HAP-1 (cell line): ENCODE measurements at regions of chr15 and their contacts with region 1.

Region 1: DNA sequence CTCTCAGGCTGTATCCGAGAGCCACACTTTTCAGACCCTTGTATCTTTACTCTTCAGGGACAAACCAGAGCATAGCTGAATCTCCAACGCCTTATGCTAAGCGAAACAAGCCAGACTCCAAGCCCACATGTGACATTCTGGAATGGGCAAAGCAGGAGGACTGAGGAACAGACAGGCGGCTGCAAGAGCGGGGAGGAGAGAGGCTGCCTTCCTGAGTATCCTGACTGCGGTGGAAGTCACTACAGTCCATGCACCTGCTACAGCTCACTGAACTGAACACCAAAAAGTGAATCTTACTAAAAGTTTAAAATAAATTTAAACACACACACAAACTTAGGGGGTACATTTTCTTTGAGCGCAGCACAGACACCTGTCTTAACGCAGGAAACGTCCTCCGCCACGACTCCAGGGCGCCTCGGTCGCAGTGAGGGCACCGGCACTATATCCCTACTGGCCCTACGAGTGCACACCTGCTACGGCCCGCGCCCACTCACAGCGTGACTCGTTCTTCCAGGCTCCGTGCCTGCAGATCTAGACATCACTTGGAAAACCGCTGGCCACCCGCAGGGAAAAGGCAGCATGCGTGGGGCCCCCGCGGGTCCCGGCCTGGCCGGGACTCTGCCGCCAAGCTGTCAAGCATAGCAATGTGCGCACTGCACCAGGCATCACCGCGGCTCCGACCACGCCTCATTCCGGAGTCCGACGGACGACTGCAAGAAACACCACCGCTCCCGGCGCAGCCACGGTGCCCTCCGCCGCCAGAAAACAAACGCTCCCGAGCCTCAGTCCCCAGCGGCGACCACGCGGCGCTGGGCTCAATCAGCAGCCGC is 1.3 kb downstream of the CYFIP1 start:
- DNase-seq: peak; percentile 48 to 78
- H3K4me3 ChIP-seq: peak overlapping the region; percentile 76
- H3K4me1 ChIP-seq: peaks cover 6% of the 10 kb centered on the region
- H3K27me3 ChIP-seq: no peaks in the 10 kb centered on the region

Region 2: GRCh38 chr15:22922003-22922402 is 56.9 kb before region 1 on chr15:
- in situ Hi-C with region 1: loop called (anchors 10 kb)
- DNase-seq: no peak
- H3K4me3 ChIP-seq: no peak overlapping the region
- H3K4me1 ChIP-seq: peaks cover 16% of the 10 kb centered on the region
- H3K27me3 ChIP-seq: no peaks in the 10 kb centered on the region

Region 3: DNA sequence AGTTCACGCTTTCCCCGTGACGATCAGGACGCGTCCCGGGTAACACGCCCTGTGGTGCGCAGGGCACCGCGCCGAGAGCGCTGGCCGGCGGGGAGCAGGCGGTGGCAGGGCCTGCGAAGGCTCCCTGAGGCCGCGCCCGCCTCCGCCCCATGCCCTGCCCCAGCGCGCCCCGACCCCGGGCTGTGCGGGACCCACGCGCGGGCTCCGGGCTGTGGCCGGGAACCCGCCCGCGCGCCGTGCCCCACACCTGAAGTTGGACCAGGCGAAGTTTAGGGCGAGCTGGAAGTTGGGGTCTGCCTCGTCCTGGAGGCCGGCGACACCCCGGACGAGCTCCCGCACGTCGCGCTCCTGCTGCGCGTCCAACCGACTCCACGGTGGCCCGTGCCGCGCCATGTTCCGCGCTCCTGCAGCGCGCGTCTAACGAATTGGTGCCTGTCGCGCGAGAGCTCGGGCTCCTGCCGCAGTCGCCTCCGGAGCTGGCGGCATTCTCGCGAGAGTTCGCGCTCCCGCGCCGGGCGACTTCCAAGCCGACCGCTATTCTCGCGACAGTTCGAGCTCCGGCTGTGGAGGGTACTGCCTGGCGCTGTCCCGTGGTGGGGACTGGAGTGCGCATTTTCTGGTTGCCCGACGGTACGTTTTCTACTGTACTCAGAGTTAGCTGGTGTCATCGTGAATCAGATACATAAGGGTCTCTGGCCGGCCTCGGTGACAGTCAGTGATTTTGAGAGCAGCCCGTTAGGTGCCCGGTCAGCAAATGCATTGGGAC is 60.4 kb after region 1 on chr15 and contains the start of gene TUBGCP5:
- in situ Hi-C with region 1: loop called (anchors 10 kb)
- DNase-seq: peak; percentile 93 to 98
- H3K4me3 ChIP-seq: peak within 1 kb of the TSS; percentile 69
- H3K4me1 ChIP-seq: no peaks in the 10 kb centered on the region; the same call in 1 of the 2 replicates
- H3K27me3 ChIP-seq: no peaks in the 10 kb centered on the region